Calu3 (cell line): ENCODE measurements at regions of chr1 and their contacts with region 1.

Region 1: DNA sequence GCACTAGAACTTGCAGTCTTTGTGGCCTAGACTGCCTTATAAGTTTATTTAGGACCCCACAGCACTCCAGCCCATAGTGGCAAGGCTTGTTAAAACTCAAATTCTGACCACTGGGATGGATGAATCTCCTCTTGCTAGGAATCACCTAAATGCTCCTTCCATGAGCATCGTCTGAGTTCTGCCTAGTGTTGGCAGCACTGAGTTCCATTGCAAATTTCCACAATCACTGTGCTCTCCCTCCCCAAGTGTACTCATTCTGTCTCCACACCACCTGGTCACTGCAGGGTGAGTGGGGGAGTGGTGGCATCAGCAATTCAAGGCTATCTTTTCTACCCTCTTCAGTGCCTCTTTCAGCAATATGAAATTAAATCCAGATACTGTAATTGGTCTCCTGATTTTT is 46.7 kb upstream of the PTBP2 start:
- DNase-seq: no peak
- H3K4me3 Mint-ChIP-seq: no peak overlapping the region
- H3K27ac Mint-ChIP-seq: no peak overlapping the region
- H3K4me1 Mint-ChIP-seq: no peaks in the 10 kb centered on the region
- H3K27me3 Mint-ChIP-seq: no peaks in the 10 kb centered on the region
- CTCF ChIP-seq: no peak

Region 2: DNA sequence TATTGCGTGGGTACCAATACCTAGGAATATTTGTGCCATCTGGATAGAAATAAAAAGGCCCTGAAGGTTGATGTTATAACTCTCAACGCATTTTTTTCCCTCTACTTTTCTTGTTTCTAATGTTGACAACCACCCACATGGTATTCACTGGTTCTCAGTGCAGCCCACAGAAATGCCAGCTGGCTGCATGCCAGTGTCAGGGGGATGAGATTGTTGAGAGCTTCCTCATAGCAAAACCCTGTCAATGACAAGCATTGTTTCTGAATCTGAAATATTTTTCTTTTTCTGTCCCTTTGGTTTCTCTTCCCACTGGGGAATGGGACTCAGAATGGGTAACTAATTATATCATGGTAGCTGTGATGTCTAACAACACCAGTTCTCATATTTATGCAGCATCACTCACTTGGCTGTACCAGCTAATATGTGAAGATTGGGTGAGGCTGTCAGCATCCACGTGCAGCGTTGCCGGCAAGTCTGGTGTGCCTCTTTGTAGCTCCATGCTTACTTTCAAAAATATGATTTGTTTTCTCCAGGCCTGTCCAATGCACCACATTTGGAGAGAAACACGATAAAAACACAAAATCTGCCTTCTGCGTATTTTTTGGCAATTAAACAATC is 331.2 kb after region 1 on chr1:
- CTCF ChIA-PET with region 1: interaction called, 13 read pairs
- intact Hi-C with region 1: no loop called
- DNase-seq: peak; percentile 79
- H3K4me3 Mint-ChIP-seq: no peak overlapping the region
- H3K27ac Mint-ChIP-seq: no peak overlapping the region
- H3K4me1 Mint-ChIP-seq: peaks cover 9% of the 10 kb centered on the region
- H3K27me3 Mint-ChIP-seq: no peaks in the 10 kb centered on the region
- CTCF ChIP-seq: no peak